K562 (cell line): ENCODE measurements at regions of chr3 and their contacts with region 1.

Region 1: GRCh38 chr3:15629860-15630597 is 28.5 kb downstream of the BTD start:
- DNase-seq: peak; percentile 72 to 86 (median 76)
- ATAC-seq: peak; percentile 99
- H3K4me3 ChIP-seq: no peak overlapping the region
- H3K27ac ChIP-seq: no peak overlapping the region
- H3K4me1 ChIP-seq: peaks cover 3 to 12% of the 10 kb centered on the region in 2 experiments; a peak in 3 of 5 replicates
- H3K27me3 ChIP-seq: no peaks in the 10 kb centered on the region
- CTCF ChIP-seq: peak; percentile 77 to 93 (median 85)
- EP300 ChIP-seq: no peak; the same call in 1 of the 2 replicates
- POLR2A ChIP-seq: no peak
- RAD21 ChIP-seq: peak; percentile 92 to 93

Region 2: GRCh38 chr3:14402304-14402811 is 1227.7 kb before region 1 on chr3 and contains the start of gene SLC6A6:
- CTCF ChIA-PET with region 1: no interaction called
- POLR2A ChIA-PET with region 1: no interaction called
- in situ Hi-C with region 1: no loop called
- intact Hi-C with region 1: no loop called
- DNase-seq: peak; percentile 94 to 97 (median 97)
- ATAC-seq: peak; percentile 80
- H3K4me3 ChIP-seq: peak within 1 kb of the TSS; percentile 92
- H3K27ac ChIP-seq: peak within 1 kb of the TSS; percentile 91
- H3K4me1 ChIP-seq: peaks cover 20 to 59% of the 10 kb centered on the region in 2 experiments; a peak in 4 of 5 replicates
- H3K27me3 ChIP-seq: no peaks in the 10 kb centered on the region
- CTCF ChIP-seq: peak; percentile 47 to 75 (median 64); a peak in 5 of 6 replicates
- EP300 ChIP-seq: 0 out of 2 replicates have a peak, but pooled peaks have one; percentile 14
- POLR2A ChIP-seq: peak; percentile 87
- RAD21 ChIP-seq: peak; percentile 52 to 67
- polyA plus RNA-seq, gene SLC6A6: 12.3 to 14.8 TPM

Region 3: DNA sequence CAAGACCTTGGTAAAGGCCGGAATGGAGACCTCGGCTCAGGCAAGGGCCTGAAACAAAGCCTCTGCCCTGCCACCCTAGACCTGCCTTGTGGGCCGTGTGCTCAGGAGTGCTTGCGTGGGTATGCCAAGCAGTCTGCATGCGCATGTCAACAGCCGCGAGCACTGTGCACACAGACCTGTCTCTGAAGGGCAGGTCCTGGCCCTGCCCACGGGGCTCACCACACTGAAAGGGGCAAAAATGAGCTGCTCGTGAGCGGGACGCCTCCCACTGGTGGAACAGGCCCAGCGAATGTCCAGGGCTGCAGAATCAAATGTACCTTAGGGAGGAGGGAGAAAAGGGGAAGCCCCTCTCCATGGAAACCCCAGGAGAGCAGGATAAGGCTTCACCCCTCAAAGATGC is 855.6 kb before region 1 on chr3:
- CTCF ChIA-PET with region 1: no interaction called
- POLR2A ChIA-PET with region 1: no interaction called
- in situ Hi-C with region 1: no loop called
- intact Hi-C with region 1: no loop called
- DNase-seq: no peak
- ATAC-seq: peak; percentile 59
- H3K4me3 ChIP-seq: no peak overlapping the region
- H3K27ac ChIP-seq: no peak overlapping the region
- H3K4me1 ChIP-seq: peaks cover 0 to 8% of the 10 kb centered on the region in 2 experiments; a peak in 2 of 5 replicates
- H3K27me3 ChIP-seq: peaks cover 30 to 60% of the 10 kb centered on the region in 2 experiments; a peak in 4 of 5 replicates
- CTCF ChIP-seq: peak in 1 of 3 experiments; percentile 36; a peak in 2 of 6 replicates
- EP300 ChIP-seq: no peak
- POLR2A ChIP-seq: no peak
- RAD21 ChIP-seq: peak in 1 of 2 experiments; percentile 29; a peak in 1 of 4 replicates

Region 4: DNA sequence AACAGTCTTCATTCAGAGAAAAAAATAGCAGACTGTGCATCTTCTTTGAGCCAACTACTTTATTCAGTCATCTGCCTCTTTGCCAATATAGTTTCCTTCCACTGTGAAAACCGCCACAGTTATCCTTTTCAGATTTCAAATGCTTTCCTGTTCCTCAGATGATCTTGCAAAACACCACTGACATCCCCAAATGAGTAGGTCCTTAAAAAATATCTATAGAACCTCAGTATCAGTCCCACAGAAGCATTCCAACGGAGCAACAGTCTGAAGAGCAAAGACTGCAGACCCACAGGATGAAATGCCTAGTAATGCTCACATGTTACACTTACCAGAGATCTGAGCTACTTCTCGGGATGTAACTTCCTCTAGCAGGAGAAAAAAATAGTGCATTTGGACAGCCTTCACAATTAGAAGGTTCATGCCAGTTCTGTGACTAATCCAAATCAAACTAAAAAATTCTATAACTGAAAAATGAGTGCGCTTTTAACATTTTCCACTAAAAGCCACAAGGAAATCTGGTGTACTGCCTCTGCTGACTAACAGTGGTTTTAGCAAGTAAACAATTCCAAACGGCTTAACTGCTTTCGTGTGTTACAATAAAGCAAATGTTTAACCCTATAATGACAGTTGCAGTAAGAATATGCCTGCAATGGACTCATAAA is 167.7 kb after region 1 on chr3 and contains the start of gene ANKRD28:
- CTCF ChIA-PET with region 1: no interaction called
- POLR2A ChIA-PET with region 1: no interaction called
- in situ Hi-C with region 1: no loop called
- intact Hi-C with region 1: no loop called
- DNase-seq: peak; percentile 31 to 76 (median 46)
- ATAC-seq: peak; percentile 83
- H3K4me3 ChIP-seq: peak within 1 kb of the TSS; percentile 30
- H3K27ac ChIP-seq: peak within 1 kb of the TSS; percentile 82
- H3K4me1 ChIP-seq: peaks cover 0 to 31% of the 10 kb centered on the region in 2 experiments; a peak in 4 of 5 replicates
- H3K27me3 ChIP-seq: no peaks in the 10 kb centered on the region
- CTCF ChIP-seq: peak in 2 of 3 experiments; percentile 10 to 47; a peak in 2 of 6 replicates
- EP300 ChIP-seq: peak; percentile 73
- POLR2A ChIP-seq: peak; percentile 51; the same call in 1 of the 2 replicates
- RAD21 ChIP-seq: no peak; a peak in 1 of 4 replicates
- polyA plus RNA-seq, gene ANKRD28: 11.7 to 13.4 TPM

Region 5: DNA sequence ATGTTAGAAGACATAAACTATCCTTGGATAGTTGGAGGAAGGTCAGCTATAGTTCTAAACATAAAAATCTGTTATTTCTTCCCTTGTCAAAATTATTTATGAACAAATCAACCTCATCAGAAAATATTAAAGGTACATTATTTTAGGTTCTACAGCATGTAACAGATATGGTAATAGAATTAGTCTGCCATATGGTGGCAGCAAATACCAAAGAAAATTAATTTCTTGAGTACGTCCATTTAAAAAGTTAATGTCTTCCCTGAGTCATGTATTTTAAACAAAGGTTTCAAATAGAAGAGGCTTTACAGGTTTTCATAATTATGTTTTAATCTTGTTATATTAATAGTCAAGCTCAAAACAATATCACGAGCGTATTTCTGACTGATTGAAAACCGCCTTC is 185.7 kb after region 1 on chr3:
- CTCF ChIA-PET with region 1: interaction called, 26 read pairs
- POLR2A ChIA-PET with region 1: interaction called, 3 read pairs
- in situ Hi-C with region 1: no loop called
- intact Hi-C with region 1: loop called (anchors 1 kb)
- DNase-seq: peak in 1 of 4 experiments; percentile 34
- ATAC-seq: peak; percentile 43; the same call in 1 of the 3 replicates
- H3K4me3 ChIP-seq: no peak overlapping the region
- H3K27ac ChIP-seq: no peak overlapping the region
- H3K4me1 ChIP-seq: no peaks in the 10 kb centered on the region
- H3K27me3 ChIP-seq: no peaks in the 10 kb centered on the region
- CTCF ChIP-seq: peak in 1 of 3 experiments; percentile 59; a peak in 2 of 6 replicates
- EP300 ChIP-seq: no peak
- POLR2A ChIP-seq: no peak
- RAD21 ChIP-seq: peak; percentile 64 to 82

Region 6: GRCh38 chr3:15974647-15975046 is 344.6 kb after region 1 on chr3:
- CTCF ChIA-PET with region 1: no interaction called
- POLR2A ChIA-PET with region 1: no interaction called
- in situ Hi-C with region 1: no loop called
- intact Hi-C with region 1: loop called (anchors 10 kb)
- DNase-seq: peak; percentile 26 to 62 (median 44)
- ATAC-seq: peak; percentile 93
- H3K4me3 ChIP-seq: no peak overlapping the region
- H3K27ac ChIP-seq: no peak overlapping the region
- H3K4me1 ChIP-seq: no peaks in the 10 kb centered on the region
- H3K27me3 ChIP-seq: peaks cover 3 to 13% of the 10 kb centered on the region in 2 experiments; a peak in 2 of 5 replicates
- CTCF ChIP-seq: peak; percentile 64 to 77 (median 68)
- EP300 ChIP-seq: no peak
- POLR2A ChIP-seq: no peak
- RAD21 ChIP-seq: peak; percentile 13 to 43; a peak in 2 of 4 replicates

Region 7: DNA sequence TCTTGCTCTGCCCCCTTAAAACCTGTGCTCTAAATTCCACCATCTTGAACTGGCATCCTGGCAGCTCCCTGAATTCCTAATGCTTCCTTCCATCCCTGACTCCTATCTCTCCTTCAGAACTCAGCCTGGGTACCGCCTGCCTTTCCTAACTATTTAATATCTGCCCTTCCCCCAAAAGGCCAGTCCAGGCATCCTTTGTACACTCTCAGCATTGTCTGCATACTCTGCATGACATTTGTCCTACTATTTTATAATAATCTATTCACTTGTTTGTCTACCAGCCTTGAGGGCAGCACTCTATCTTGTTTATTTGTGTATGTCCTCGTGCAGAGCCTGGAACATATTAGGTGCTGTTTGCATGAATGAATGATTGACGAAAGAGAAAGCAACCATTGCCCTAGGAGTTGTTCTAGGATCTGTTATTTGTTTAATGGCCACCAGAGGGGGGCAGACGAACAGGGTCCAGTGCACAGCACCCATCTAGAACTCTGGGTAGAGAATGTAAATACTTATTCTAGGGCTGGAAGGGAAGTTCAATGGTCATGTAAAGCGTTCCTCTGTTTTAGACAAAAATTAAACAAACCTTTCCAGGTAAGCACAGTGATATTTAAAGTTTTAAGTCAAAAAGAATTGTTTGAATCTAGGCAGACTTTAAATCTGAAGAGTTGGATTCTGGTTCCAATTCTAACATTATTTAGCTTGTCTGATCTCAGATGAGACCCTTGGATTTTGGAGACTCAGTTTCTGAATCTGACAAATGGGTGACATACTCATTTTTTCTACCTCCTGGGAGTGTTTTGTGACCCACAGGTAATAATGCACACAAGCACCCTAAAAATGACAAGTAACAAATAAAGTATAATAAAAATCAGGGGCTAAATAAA is 418.6 kb after region 1 on chr3:
- CTCF ChIA-PET with region 1: interaction called, 3 read pairs
- POLR2A ChIA-PET with region 1: no interaction called
- in situ Hi-C with region 1: no loop called
- intact Hi-C with region 1: loop called (anchors 1 kb)
- DNase-seq: peak; percentile 70 to 75 (median 74)
- ATAC-seq: peak; percentile 99
- H3K4me3 ChIP-seq: no peak overlapping the region
- H3K27ac ChIP-seq: no peak overlapping the region
- H3K4me1 ChIP-seq: no peaks in the 10 kb centered on the region
- H3K27me3 ChIP-seq: peaks cover 0 to 11% of the 10 kb centered on the region in 2 experiments; a peak in 2 of 5 replicates
- CTCF ChIP-seq: peak; percentile 82 to 89 (median 84)
- EP300 ChIP-seq: no peak
- POLR2A ChIP-seq: no peak
- RAD21 ChIP-seq: peak; percentile 94 to 95

Region 8: GRCh38 chr3:16177962-16178627 is 548.1 kb after region 1 on chr3:
- CTCF ChIA-PET with region 1: no interaction called
- POLR2A ChIA-PET with region 1: no interaction called
- in situ Hi-C with region 1: no loop called
- intact Hi-C with region 1: loop called (anchors 2 kb)
- DNase-seq: peak; percentile 74 to 90 (median 82)
- ATAC-seq: peak; percentile 97
- H3K4me3 ChIP-seq: no peak overlapping the region
- H3K27ac ChIP-seq: no peak overlapping the region
- H3K4me1 ChIP-seq: peaks cover 0 to 5% of the 10 kb centered on the region in 2 experiments; a peak in 1 of 5 replicates
- H3K27me3 ChIP-seq: peaks cover 17 to 55% of the 10 kb centered on the region in 2 experiments
- CTCF ChIP-seq: peak; percentile 94 to 97 (median 96)
- EP300 ChIP-seq: no peak
- POLR2A ChIP-seq: no peak
- RAD21 ChIP-seq: peak; percentile 94

Region 9: DNA sequence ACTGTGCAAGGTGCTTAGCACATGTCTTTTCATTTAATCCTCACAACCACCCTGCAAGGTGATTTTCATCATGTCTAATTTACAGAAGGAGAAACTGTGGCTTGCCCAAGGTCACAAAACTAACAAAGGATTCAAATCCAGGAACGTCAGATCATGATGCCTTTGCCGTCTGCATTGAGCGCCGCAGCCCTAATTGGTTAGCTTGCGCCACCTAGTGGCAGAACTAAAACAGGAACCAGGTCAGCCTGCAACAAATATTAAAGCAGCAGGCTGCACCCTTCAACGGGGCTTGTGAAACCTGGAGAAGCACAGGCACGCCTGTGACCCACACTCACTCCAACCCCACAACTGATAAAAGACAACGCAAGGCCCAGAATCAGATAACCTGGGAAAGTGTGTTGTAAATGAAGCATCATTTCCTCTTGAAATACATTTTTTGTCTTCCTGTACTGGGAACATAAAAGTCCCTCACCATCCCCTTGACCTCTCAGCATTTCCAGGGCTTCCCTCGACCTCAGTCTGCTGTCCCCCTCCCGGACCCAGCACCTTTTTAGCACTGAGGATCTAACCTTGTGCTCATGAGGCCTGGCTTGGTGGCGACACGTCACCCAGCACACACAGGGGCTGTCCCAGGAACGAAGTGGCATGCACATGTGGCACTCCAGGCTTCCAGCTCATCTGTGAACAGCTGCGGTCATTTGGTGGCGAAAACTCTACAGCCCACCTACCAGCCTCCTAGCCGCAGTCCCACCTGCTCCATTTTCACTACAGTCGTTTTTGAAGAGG is 617.4 kb after region 1 on chr3:
- CTCF ChIA-PET with region 1: interaction called, 7 read pairs
- POLR2A ChIA-PET with region 1: no interaction called
- in situ Hi-C with region 1: loop called (anchors 10 kb)
- intact Hi-C with region 1: loop called (anchors 2 kb)
- DNase-seq: peak; percentile 74 to 90 (median 79)
- ATAC-seq: peak; percentile 95
- H3K4me3 ChIP-seq: no peak overlapping the region
- H3K27ac ChIP-seq: no peak overlapping the region
- H3K4me1 ChIP-seq: peaks cover 3 to 4% of the 10 kb centered on the region in 2 experiments; a peak in 2 of 5 replicates
- H3K27me3 ChIP-seq: peaks cover 21 to 39% of the 10 kb centered on the region in 2 experiments
- CTCF ChIP-seq: peak; percentile 92 to 99 (median 96)
- EP300 ChIP-seq: no peak
- POLR2A ChIP-seq: no peak
- RAD21 ChIP-seq: peak; percentile 94 to 95

Region 10: GRCh38 chr3:16529264-16529663 is 899.2 kb after region 1 on chr3:
- CTCF ChIA-PET with region 1: no interaction called
- POLR2A ChIA-PET with region 1: no interaction called
- in situ Hi-C with region 1: loop called (anchors 25 kb)
- intact Hi-C with region 1: no loop called
- DNase-seq: no peak
- ATAC-seq: peak; percentile 24; the same call in 1 of the 3 replicates
- H3K4me3 ChIP-seq: no peak overlapping the region
- H3K27ac ChIP-seq: no peak overlapping the region
- H3K4me1 ChIP-seq: no peaks in the 10 kb centered on the region
- H3K27me3 ChIP-seq: peaks cover 27 to 45% of the 10 kb centered on the region in 2 experiments; a peak in 4 of 5 replicates
- CTCF ChIP-seq: no peak
- EP300 ChIP-seq: no peak
- POLR2A ChIP-seq: no peak
- RAD21 ChIP-seq: no peak; a peak in 1 of 4 replicates